ENCODE measurements at regions of chr3 and their contacts with region 1.

Region 1: DNA sequence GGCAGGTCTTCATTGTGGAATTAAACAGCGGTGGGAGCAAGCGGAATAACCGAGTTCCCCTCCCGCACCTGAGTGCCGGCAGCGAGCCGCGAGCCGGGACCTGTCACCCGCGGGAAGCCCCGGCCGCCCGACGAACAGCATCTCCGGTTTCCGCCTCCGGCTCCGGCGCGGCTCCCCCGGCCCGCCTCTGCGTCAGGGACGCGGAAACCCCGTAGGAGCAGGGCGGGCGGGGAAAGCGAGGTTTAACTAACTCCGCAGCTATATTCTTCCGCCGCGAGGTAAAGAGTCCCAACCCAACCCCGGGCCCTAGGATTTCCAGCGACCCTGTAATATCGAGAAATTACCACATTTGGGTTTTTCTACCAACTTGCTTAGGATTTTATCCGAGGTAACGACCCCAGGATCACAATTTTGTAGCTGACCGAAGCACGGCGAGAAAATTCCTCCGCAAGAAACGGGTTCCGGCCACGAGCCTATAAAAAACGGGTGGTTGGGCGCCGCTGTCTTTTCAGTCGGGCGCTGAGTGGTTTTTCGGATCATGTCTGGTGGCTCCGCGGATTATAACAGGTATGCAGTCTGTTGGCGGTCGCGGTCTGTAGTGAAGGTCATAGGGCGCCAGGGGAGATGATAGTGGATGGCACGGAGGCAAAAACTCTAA is at the start of gene EIF4A2:
- DNase-seq: peak; percentile 91 to 93 (median 93)
- H3K4me3 ChIP-seq: peak within 1 kb of the TSS; percentile 86 to 97
- H3K4me3 Mint-ChIP-seq: peak within 1 kb of the TSS; percentile 95 to 100 (median 100)
- H3K27ac ChIP-seq: peak within 1 kb of the TSS; percentile 98
- H3K27ac Mint-ChIP-seq: peak within 1 kb of the TSS; percentile 97 to 100 (median 100)
- H3K4me1 ChIP-seq: peaks cover 38% of the 10 kb centered on the region
- H3K4me1 Mint-ChIP-seq: peaks cover 39 to 63% (median 46%) of the 10 kb centered on the region in 4 donors
- H3K27me3 ChIP-seq: no peaks in the 10 kb centered on the region
- H3K27me3 Mint-ChIP-seq: peaks cover 0 to 1% of the 10 kb centered on the region in 2 donors
- total RNA-seq, gene EIF4A2: 589 to 632 TPM

Region 2: DNA sequence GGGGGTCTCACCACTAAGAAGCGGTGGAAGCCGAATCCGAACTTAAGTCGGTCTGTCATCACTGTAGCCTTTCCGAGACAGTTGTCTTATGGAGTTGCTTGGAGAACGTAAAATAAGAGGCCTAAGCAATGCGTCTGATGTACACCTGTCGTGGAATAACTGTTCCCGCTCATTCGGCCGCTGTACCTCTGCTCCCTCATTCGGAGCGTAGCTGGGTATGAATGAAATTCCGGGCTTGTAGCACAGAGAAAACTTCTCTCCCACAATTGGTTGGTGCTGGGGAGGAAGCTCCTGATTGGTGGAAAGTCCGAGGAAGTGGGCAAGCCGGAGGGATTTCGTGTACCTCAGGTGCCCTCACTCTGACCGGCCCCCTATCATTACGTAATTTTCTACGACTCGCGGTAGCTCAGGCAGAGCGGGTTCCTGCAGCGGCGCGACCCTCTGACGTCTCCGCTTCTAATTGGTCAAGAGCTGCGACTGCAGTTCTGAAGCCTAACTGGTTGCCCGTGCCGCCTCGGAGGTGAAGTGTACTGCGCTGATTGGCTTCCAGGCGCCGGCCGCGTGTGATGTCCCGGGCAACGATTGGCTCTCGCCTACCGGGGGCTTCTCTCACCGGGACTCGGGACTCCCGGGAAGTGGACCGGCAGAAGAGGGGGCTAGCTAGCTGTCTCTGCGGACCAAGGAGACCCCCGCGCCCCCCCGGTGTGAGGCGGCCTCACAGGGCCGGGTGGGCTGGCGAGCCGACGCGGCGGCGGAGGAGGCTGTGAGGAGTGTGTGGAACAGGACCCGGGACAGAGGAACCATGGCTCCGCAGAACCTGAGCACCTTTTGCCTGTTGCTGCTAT is 212.9 kb before region 1 on chr3 and contains the start of gene DNAJB11:
- CTCF ChIA-PET with region 1: interaction called, 3 read pairs
- POLR2A ChIA-PET with region 1: interaction called, 100 read pairs
- intact Hi-C with region 1: loop called (anchors 1 kb)
- DNase-seq: peak; percentile 96 to 100 (median 99)
- H3K4me3 ChIP-seq: peak within 1 kb of the TSS; percentile 71 to 93
- H3K4me3 Mint-ChIP-seq: peak within 1 kb of the TSS; percentile 89 to 100 (median 94)
- H3K27ac ChIP-seq: peak within 1 kb of the TSS; percentile 91
- H3K27ac Mint-ChIP-seq: peak within 1 kb of the TSS; percentile 95 to 99 (median 98)
- H3K4me1 ChIP-seq: peaks cover 37% of the 10 kb centered on the region
- H3K4me1 Mint-ChIP-seq: peaks cover 30 to 71% (median 45%) of the 10 kb centered on the region in 4 donors
- H3K27me3 ChIP-seq: no peaks in the 10 kb centered on the region
- H3K27me3 Mint-ChIP-seq: no peaks in the 10 kb centered on the region
- total RNA-seq, gene DNAJB11: 34.0 to 38.6 TPM

Region 3: GRCh38 chr3:186806089-186807055 is 23.2 kb after region 1 on chr3 and contains the start of gene RFC4:
- CTCF ChIA-PET with region 1: interaction called, 5 read pairs
- POLR2A ChIA-PET with region 1: interaction called, 160 read pairs
- intact Hi-C with region 1: loop called (anchors 1 kb)
- DNase-seq: peak; percentile 81 to 88 (median 83)
- H3K4me3 ChIP-seq: peak within 1 kb of the TSS; percentile 90 to 98
- H3K4me3 Mint-ChIP-seq: peak within 1 kb of the TSS; percentile 93 to 98 (median 96)
- H3K27ac ChIP-seq: peak within 1 kb of the TSS; percentile 93
- H3K27ac Mint-ChIP-seq: peak within 1 kb of the TSS; percentile 89 to 97 (median 95)
- H3K4me1 ChIP-seq: peaks cover 18% of the 10 kb centered on the region
- H3K4me1 Mint-ChIP-seq: peaks cover 11 to 33% (median 17%) of the 10 kb centered on the region in 4 donors
- H3K27me3 ChIP-seq: no peaks in the 10 kb centered on the region
- H3K27me3 Mint-ChIP-seq: no peaks in the 10 kb centered on the region
- total RNA-seq, gene RFC4: 21.5 to 24.6 TPM

Region 4: GRCh38 chr3:186909078-186909853 is 126.1 kb after region 1 on chr3:
- CTCF ChIA-PET with region 1: no interaction called
- POLR2A ChIA-PET with region 1: interaction called, 10 read pairs
- intact Hi-C with region 1: no loop called
- DNase-seq: peak; percentile 84 to 89 (median 87)
- H3K4me3 ChIP-seq: peak overlapping the region; percentile 50 to 66
- H3K4me3 Mint-ChIP-seq: peak overlapping the region; percentile 58 to 86 (median 77)
- H3K27ac ChIP-seq: peak overlapping the region; percentile 58
- H3K27ac Mint-ChIP-seq: peak overlapping the region; percentile 91 to 95 (median 94)
- H3K4me1 ChIP-seq: peaks cover 32% of the 10 kb centered on the region
- H3K4me1 Mint-ChIP-seq: peaks cover 22 to 52% (median 38%) of the 10 kb centered on the region in 4 donors
- H3K27me3 ChIP-seq: no peaks in the 10 kb centered on the region
- H3K27me3 Mint-ChIP-seq: no peaks in the 10 kb centered on the region

Region 5: GRCh38 chr3:187130346-187131066 is 347.3 kb after region 1 on chr3:
- CTCF ChIA-PET with region 1: no interaction called
- POLR2A ChIA-PET with region 1: interaction called, 22 read pairs
- intact Hi-C with region 1: loop called (anchors 5 kb)
- DNase-seq: peak; percentile 74 to 86 (median 83)
- H3K4me3 ChIP-seq: peak overlapping the region in 1 of 2 donors; percentile 37
- H3K4me3 Mint-ChIP-seq: peak overlapping the region; percentile 22 to 82 (median 74)
- H3K27ac ChIP-seq: peak overlapping the region; percentile 74
- H3K27ac Mint-ChIP-seq: peak overlapping the region; percentile 93 to 99 (median 98)
- H3K4me1 ChIP-seq: peaks cover 26% of the 10 kb centered on the region
- H3K4me1 Mint-ChIP-seq: peaks cover 16 to 39% (median 27%) of the 10 kb centered on the region in 4 donors
- H3K27me3 ChIP-seq: no peaks in the 10 kb centered on the region
- H3K27me3 Mint-ChIP-seq: no peaks in the 10 kb centered on the region

Measured in CD4-positive, alpha-beta memory T cell (primary cell).